ENCODE measurements at regions of chr7 and their contacts with region 1.

Region 1: GRCh38 chr7:5704534-5704922 is 76.9 kb downstream of the RNF216 start:
- DNase-seq: peak; percentile 71 to 77
- ATAC-seq: peak; percentile 87 to 89
- H3K4me3 ChIP-seq: no peak overlapping the region
- H3K27ac ChIP-seq: peak overlapping the region in 1 of 2 experiments; percentile 41; a peak in 4 of 6 replicates
- H3K4me1 ChIP-seq: peaks cover 38% of the 10 kb centered on the region
- CTCF ChIP-seq: peak; percentile 97
- EP300 ChIP-seq: no peak
- POLR2A ChIP-seq: no peak
- RAD21 ChIP-seq: peak; percentile 92 to 96

Region 2: DNA sequence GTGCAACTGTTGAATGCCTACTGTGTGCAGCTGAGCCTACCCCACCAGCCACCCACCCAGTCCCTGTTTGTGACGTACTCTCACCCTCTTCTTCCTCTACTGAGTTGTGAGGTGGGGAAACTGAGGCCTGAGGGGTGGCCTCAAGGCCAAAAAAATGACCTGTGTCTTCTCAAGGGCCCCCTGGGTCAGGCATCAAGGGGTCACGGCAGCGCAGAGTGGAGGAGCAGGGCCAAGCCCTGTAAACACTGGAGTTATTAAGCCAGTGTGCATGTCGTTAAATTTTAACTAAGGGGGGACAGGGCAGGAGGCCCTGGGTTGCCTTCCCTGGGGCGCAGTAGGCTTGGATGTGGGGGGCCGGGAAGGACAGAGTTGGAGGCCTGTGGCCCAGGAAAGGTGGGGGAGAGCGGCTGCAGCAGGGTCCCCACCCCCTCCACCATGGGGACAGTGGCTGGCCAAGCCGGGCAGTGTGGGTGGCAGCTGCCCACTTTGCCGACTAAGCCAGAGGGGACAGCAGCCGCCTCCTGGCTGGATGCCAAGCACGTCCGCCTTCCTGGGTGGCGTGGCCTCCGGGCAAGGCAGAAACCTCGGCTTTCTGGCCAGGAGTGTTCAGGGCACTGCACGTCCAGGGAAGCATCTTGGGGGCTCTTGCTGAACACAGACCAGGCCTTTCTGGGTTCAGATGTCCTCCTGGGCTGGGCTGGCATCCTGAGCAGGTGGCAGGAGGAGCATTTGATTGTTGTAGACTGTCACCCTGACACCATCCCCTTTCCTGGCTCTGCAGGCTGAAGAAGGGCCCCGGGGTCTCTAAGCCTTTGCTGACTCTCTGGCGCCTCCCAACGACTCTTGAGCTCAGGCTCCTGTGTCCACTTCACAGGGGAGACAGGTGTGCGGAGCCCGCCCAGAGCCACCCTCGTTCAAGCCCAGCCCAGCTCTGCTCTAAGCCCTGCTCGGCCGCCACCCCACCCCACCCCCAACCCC is 419.9 kb before region 1 on chr7:
- CTCF ChIA-PET with region 1: no interaction called
- POLR2A ChIA-PET with region 1: no interaction called
- DNase-seq: peak; percentile 83 to 84
- ATAC-seq: peak; percentile 71 to 88
- H3K4me3 ChIP-seq: peak overlapping the region; percentile 74; the same call in 1 of the 3 replicates
- H3K27ac ChIP-seq: peak overlapping the region; percentile 12 to 96
- H3K4me1 ChIP-seq: peaks cover 17% of the 10 kb centered on the region
- CTCF ChIP-seq: peak; percentile 60
- EP300 ChIP-seq: no peak
- POLR2A ChIP-seq: no peak
- RAD21 ChIP-seq: peak; percentile 63 to 71

Region 3: GRCh38 chr7:5450549-5451372 is 253.8 kb before region 1 on chr7:
- CTCF ChIA-PET with region 1: no interaction called
- POLR2A ChIA-PET with region 1: no interaction called
- DNase-seq: peak; percentile 41 to 58
- ATAC-seq: peak; percentile 73 to 85
- H3K4me3 ChIP-seq: no peak overlapping the region
- H3K27ac ChIP-seq: no peak overlapping the region
- H3K4me1 ChIP-seq: peaks cover 18% of the 10 kb centered on the region; the same call in 2 of the 3 replicates
- CTCF ChIP-seq: peak; percentile 81
- EP300 ChIP-seq: no peak
- POLR2A ChIP-seq: no peak
- RAD21 ChIP-seq: peak; percentile 91 to 93

Region 4: DNA sequence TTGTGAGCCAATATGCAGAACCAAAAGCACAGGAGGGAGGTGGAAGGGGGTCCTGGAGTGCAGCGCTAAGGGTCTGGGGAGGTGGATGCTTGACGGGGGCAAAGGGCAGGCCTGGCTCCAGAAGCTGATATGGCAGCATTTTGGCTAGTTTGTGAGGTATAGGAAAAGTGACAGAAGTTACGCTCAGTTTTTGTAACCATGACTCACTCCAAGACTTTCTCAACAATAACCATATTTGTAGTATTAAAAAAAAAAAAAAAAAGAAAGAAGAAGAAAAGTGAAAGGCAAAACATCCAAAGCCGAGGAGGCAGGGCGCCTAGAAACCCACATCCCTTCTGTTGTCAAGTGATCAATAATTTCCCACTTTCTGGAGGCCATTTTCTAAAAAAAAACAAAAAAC is 15.4 kb before region 1 on chr7:
- CTCF ChIA-PET with region 1: interaction called, 73 read pairs
- POLR2A ChIA-PET with region 1: interaction called, 6 read pairs
- DNase-seq: no peak
- ATAC-seq: no peak
- H3K4me3 ChIP-seq: no peak overlapping the region
- H3K27ac ChIP-seq: peak overlapping the region; percentile 41 to 86; a peak in 4 of 6 replicates
- H3K4me1 ChIP-seq: peaks cover 62% of the 10 kb centered on the region
- CTCF ChIP-seq: no peak
- EP300 ChIP-seq: no peak
- POLR2A ChIP-seq: no peak
- RAD21 ChIP-seq: no peak

Region 5: GRCh38 chr7:5892498-5892897 is 188.0 kb after region 1 on chr7:
- CTCF ChIA-PET with region 1: no interaction called
- POLR2A ChIA-PET with region 1: no interaction called
- DNase-seq: no peak
- ATAC-seq: no peak
- H3K4me3 ChIP-seq: no peak overlapping the region
- H3K27ac ChIP-seq: no peak overlapping the region
- H3K4me1 ChIP-seq: peaks cover 7% of the 10 kb centered on the region; the same call in 1 of the 3 replicates
- CTCF ChIP-seq: no peak
- EP300 ChIP-seq: no peak
- POLR2A ChIP-seq: no peak
- RAD21 ChIP-seq: no peak

Region 6: GRCh38 chr7:6078548-6078947 is 374.0 kb after region 1 on chr7:
- CTCF ChIA-PET with region 1: no interaction called
- POLR2A ChIA-PET with region 1: no interaction called
- DNase-seq: no peak
- ATAC-seq: no peak
- H3K4me3 ChIP-seq: no peak overlapping the region
- H3K27ac ChIP-seq: peak overlapping the region; percentile 82 to 92; a peak in 5 of 6 replicates
- H3K4me1 ChIP-seq: peaks cover 15% of the 10 kb centered on the region
- CTCF ChIP-seq: no peak
- EP300 ChIP-seq: no peak
- POLR2A ChIP-seq: no peak
- RAD21 ChIP-seq: no peak

Measured in A549 (cell line).